ENCODE measurements at regions of chr13 and their contacts with region 1.

Region 1: GRCh38 chr13:110123041-110123809 is 183.7 kb downstream of the COL4A1 start:
- DNase-seq: no peak
- H3K4me3 ChIP-seq: no peak overlapping the region
- H3K27ac ChIP-seq: no peak overlapping the region
- H3K4me1 ChIP-seq: peaks cover 0 to 27% of the 10 kb centered on the region in 2 experiments; a peak in 2 of 4 replicates
- H3K27me3 ChIP-seq: no peaks in the 10 kb centered on the region
- CTCF ChIP-seq: no peak
- EP300 ChIP-seq: no peak
- RAD21 ChIP-seq: no peak

Region 2: GRCh38 chr13:110108347-110109174 is 14.7 kb before region 1 on chr13:
- CTCF ChIA-PET with region 1: interaction called, 10 read pairs
- POLR2A ChIA-PET with region 1: no interaction called
- DNase-seq: peak; percentile 91
- H3K4me3 ChIP-seq: no peak overlapping the region
- H3K27ac ChIP-seq: no peak overlapping the region
- H3K4me1 ChIP-seq: peaks cover 6 to 23% of the 10 kb centered on the region in 2 experiments; a peak in 3 of 4 replicates
- H3K27me3 ChIP-seq: no peaks in the 10 kb centered on the region
- CTCF ChIP-seq: peak; percentile 85
- EP300 ChIP-seq: no peak
- RAD21 ChIP-seq: peak; percentile 97

Measured in SK-N-SH (cell line).